ENCODE measurements at regions of chr7 and their contacts with region 1.

Region 1: DNA sequence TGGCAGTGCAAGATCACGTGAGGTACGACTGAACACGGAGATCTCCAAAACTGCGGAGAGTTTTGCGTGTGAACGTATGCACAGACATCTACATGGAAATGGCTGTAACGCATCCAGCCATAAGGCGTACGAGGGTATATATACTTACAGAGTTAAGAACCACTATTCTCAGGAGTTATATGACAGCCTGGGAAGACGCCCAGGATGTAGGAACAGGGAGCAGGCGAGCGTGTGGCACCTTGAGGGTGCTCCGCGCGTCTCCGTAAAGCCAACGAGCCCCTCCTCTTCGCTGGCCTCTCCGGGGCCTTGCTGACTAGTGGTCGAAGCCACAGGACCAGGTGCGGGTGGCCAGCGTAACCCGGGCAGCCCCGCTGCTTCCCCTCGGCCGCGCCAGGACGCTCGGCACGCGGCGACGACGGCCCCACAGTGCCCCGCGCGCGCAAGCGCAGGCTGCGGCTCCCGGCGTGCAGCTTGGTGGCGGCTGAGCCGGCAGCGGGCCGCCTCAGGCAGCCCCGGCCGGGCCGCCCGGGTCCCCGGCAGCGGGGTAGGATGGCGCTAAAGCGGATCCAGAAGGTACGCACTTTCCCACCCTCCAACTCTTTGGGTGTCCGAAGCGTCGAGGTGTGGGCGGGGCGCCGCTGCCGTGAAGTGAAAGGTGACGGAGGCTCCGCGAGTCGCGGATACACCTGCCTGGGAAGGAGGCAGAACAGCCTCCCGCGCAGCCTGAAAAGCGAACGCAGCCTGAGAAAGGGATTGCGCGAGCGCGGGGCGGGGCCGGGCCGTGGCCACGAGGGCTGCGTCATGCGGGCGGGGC is at the start of gene UBE2D4:
- DNase-seq: peak; percentile 83 to 93 (median 91)
- ATAC-seq: peak; percentile 93
- H3K4me3 ChIP-seq: peak within 1 kb of the TSS; percentile 73
- H3K4me3 Mint-ChIP-seq: peak within 1 kb of the TSS; percentile 90 to 95 (median 93)
- H3K27ac ChIP-seq: peak within 1 kb of the TSS; percentile 94
- H3K27ac Mint-ChIP-seq: peak within 1 kb of the TSS; percentile 92 to 98 (median 96)
- H3K4me1 ChIP-seq: peaks cover 6 to 16% of the 10 kb centered on the region in 2 donors
- H3K4me1 Mint-ChIP-seq: peaks cover 20 to 58% (median 40%) of the 10 kb centered on the region in 7 donors
- H3K27me3 ChIP-seq: no peaks in the 10 kb centered on the region
- H3K27me3 Mint-ChIP-seq: no peaks in the 10 kb centered on the region
- total RNA-seq, gene UBE2D4: 6.3 to 13.9 (median 9.6) TPM

Region 2: GRCh38 chr7:42931834-42932651 is 994.1 kb before region 1 on chr7 and contains the starts of genes MRPL32 and PSMA2:
- CTCF ChIA-PET with region 1: no interaction called
- POLR2A ChIA-PET with region 1: interaction called, 4 read pairs
- intact Hi-C with region 1: loop called in 1 of 2 experiments (anchors 1 kb)
- DNase-seq: peak; percentile 83 to 97 (median 94)
- ATAC-seq: peak; percentile 99
- H3K4me3 ChIP-seq: peak within 1 kb of the TSS; percentile 100
- H3K4me3 Mint-ChIP-seq: peak within 1 kb of the TSS; percentile 88 to 100 (median 98)
- H3K27ac ChIP-seq: peak within 1 kb of the TSS; percentile 89
- H3K27ac Mint-ChIP-seq: peak within 1 kb of the TSS; percentile 92 to 100 (median 97)
- H3K4me1 ChIP-seq: peaks cover 24 to 48% of the 10 kb centered on the region in 2 donors
- H3K4me1 Mint-ChIP-seq: peaks cover 31 to 93% (median 71%) of the 10 kb centered on the region in 7 donors
- H3K27me3 ChIP-seq: no peaks in the 10 kb centered on the region
- H3K27me3 Mint-ChIP-seq: no peaks in the 10 kb centered on the region
- total RNA-seq, gene MRPL32: 27.7 to 58.2 (median 53.4) TPM
- total RNA-seq, gene PSMA2: 29.3 to 144 (median 35.3) TPM

Region 3: GRCh38 chr7:43481902-43482678 is 444.1 kb before region 1 on chr7:
- CTCF ChIA-PET with region 1: no interaction called
- POLR2A ChIA-PET with region 1: no interaction called
- intact Hi-C with region 1: no loop called
- DNase-seq: no peak
- ATAC-seq: no peak
- H3K4me3 ChIP-seq: no peak overlapping the region
- H3K4me3 Mint-ChIP-seq: no peak overlapping the region
- H3K27ac ChIP-seq: no peak overlapping the region
- H3K27ac Mint-ChIP-seq: no peak overlapping the region
- H3K4me1 ChIP-seq: no peaks in the 10 kb centered on the region
- H3K4me1 Mint-ChIP-seq: peaks cover 0 to 3% (median 0%) of the 10 kb centered on the region in 7 donors
- H3K27me3 ChIP-seq: no peaks in the 10 kb centered on the region
- H3K27me3 Mint-ChIP-seq: peaks cover 0 to 20% (median 0%) of the 10 kb centered on the region in 5 donors

Region 4: DNA sequence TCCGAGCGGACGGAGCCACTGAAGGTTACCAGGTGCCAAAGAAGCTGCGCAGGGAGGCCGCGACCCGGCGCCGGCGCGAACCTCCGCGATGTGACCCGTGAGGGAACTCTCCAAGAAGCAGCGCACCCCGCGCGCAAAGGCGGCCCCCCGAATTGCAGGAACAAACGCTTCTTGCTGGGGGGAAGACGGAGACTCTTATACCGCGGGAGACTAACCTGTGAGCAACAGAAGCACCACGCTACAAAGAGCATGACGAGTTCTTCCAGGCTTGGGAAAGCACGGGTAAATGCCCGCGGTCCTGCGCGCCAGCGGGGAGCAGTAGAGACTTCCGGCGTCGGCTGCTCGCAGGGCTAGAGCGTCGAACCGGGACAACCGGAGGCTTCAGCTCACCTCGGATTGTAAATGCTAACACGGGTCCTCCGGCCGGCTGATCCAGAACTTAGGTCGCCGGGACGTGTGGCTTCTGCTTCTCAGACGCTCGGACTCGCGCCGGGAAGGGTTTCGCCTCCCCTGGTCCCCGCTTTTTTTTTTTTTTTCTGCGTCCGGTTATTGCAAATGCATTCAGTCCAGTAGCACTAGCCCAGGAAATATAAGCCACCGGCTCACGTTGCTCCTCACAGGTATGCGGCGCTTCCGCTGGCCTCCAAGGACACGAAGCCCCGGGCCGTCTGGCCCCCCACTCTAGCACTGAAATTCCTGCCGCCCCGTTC is 196.8 kb before region 1 on chr7 and contains the start of gene COA1:
- CTCF ChIA-PET with region 1: interaction called, 3 read pairs
- POLR2A ChIA-PET with region 1: interaction called, 3 read pairs
- intact Hi-C with region 1: loop called in 1 of 2 experiments (anchors 1 kb)
- DNase-seq: peak; percentile 61 to 85 (median 81)
- ATAC-seq: peak; percentile 98
- H3K4me3 ChIP-seq: peak within 1 kb of the TSS; percentile 91
- H3K4me3 Mint-ChIP-seq: peak within 1 kb of the TSS; percentile 81 to 96 (median 94)
- H3K27ac ChIP-seq: peak within 1 kb of the TSS; percentile 76
- H3K27ac Mint-ChIP-seq: peak within 1 kb of the TSS; percentile 75 to 95 (median 90)
- H3K4me1 ChIP-seq: peaks cover 15 to 24% of the 10 kb centered on the region in 2 donors
- H3K4me1 Mint-ChIP-seq: peaks cover 27 to 57% (median 38%) of the 10 kb centered on the region in 7 donors
- H3K27me3 ChIP-seq: no peaks in the 10 kb centered on the region
- H3K27me3 Mint-ChIP-seq: peaks cover 0 to 4% (median 0%) of the 10 kb centered on the region in 5 donors
- total RNA-seq, gene COA1: 51.3 to 73.3 (median 64.6) TPM

Region 5: DNA sequence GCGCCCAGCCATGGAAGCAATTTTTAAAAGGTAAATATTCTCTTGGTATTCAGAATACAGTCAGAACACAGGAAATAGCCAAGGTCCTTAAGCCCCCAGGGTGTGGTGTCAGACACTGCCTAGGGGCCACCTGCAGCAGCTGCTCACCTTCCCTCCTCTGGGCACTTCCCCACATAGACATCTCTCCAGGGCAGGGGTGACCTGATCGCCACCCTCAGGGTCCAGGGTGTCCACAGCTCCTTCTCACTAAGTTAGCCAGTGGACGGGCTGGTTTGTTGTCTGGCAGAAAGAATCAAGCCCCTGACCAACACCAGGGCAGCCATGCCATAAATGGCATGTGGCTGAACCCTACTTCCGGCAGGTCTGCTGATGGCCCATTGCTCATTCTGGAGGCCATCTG is 35.7 kb before region 1 on chr7:
- CTCF ChIA-PET with region 1: no interaction called
- POLR2A ChIA-PET with region 1: no interaction called
- intact Hi-C with region 1: loop called in 1 of 2 experiments (anchors 5 kb)
- DNase-seq: no peak
- ATAC-seq: no peak
- H3K4me3 ChIP-seq: no peak overlapping the region
- H3K4me3 Mint-ChIP-seq: no peak overlapping the region
- H3K27ac ChIP-seq: no peak overlapping the region
- H3K27ac Mint-ChIP-seq: no peak overlapping the region
- H3K4me1 ChIP-seq: peaks cover 8 to 10% of the 10 kb centered on the region in 2 donors
- H3K4me1 Mint-ChIP-seq: peaks cover 26 to 59% (median 49%) of the 10 kb centered on the region in 7 donors
- H3K27me3 ChIP-seq: no peaks in the 10 kb centered on the region
- H3K27me3 Mint-ChIP-seq: no peaks in the 10 kb centered on the region

Region 6: DNA sequence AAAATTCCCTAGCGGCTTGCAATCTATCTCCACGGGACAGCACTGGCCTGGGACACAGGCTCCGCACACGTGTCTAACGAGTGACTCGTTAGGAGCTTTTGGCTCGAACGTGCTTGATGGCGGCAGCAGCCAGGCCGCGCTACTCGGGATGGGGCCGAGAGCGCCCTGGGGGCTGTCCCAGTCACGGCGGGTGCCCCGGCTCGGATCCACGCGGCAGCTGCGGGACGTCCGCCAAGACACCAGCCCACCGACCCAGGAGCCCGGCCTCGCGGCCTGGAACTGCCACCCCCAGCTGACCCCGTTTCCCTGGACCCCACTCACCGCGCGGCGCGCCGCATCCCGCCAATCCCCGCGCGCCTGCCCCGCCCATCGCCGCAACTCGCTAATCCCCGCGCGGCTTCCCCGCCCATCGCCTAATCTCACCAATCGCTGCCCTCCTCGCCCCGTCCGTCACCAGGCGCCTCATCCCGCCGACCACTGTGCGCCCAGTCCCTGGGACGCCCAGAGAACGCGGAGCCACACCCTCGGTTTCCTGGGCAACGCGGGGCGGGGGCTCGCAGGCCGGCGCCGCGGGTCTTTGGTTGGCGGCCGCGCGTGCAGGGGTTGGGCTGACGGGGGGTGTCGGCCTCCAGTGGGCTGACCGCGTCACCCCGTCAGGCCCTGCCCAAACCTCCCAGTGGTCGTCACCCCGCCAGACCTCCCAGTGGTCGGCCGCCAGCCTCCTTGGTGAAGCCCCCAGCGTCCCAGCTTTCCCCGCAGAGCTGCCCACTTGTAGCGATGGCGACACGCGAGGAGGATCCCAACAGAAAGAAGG is 197.2 kb after region 1 on chr7 and contains the start of gene POLD2:
- CTCF ChIA-PET with region 1: no interaction called
- POLR2A ChIA-PET with region 1: no interaction called
- intact Hi-C with region 1: loop called in 1 of 2 experiments (anchors 1 kb)
- DNase-seq: peak; percentile 88 to 99 (median 94)
- ATAC-seq: peak; percentile 99
- H3K4me3 ChIP-seq: peak within 1 kb of the TSS; percentile 89
- H3K4me3 Mint-ChIP-seq: peak within 1 kb of the TSS; percentile 82 to 97 (median 93)
- H3K27ac ChIP-seq: peak within 1 kb of the TSS; percentile 74
- H3K27ac Mint-ChIP-seq: peak within 1 kb of the TSS; percentile 40 to 96 (median 87)
- H3K4me1 ChIP-seq: peaks cover 8 to 9% of the 10 kb centered on the region in 2 donors
- H3K4me1 Mint-ChIP-seq: peaks cover 18 to 40% (median 39%) of the 10 kb centered on the region in 7 donors
- H3K27me3 ChIP-seq: no peaks in the 10 kb centered on the region
- H3K27me3 Mint-ChIP-seq: peaks cover 0 to 23% (median 0%) of the 10 kb centered on the region in 5 donors
- total RNA-seq, gene POLD2: 55.1 to 118 (median 69.2) TPM

Measured in naive thymus-derived CD4-positive, alpha-beta T cell (primary cell).